Activated T-helper 1 cell treated with anti-CD3 and anti-CD28 coated beads, Interleukin-12 subunit alpha, Interleukin-12 subunit beta, Interleukin-2, Interleukin-4 antibody, amounts not matched to agents 30 ng/mL and 10 ng/mL and 1 ng/mL, durations not matched to agents 14 hours and 24 hours and 36 hours (primary cell): ENCODE measurements at regions of chr3 and their contacts with region 1.

Region 1: GRCh38 chr3:172332256-172333041 is 115.8 kb downstream of the GHSR start:
- DNase-seq: peak; percentile 43
- H3K4me3 Mint-ChIP-seq: no peak overlapping the region
- H3K27ac Mint-ChIP-seq: no peak overlapping the region
- H3K4me1 Mint-ChIP-seq: no peaks in the 10 kb centered on the region
- H3K27me3 Mint-ChIP-seq: no peaks in the 10 kb centered on the region

Region 2: DNA sequence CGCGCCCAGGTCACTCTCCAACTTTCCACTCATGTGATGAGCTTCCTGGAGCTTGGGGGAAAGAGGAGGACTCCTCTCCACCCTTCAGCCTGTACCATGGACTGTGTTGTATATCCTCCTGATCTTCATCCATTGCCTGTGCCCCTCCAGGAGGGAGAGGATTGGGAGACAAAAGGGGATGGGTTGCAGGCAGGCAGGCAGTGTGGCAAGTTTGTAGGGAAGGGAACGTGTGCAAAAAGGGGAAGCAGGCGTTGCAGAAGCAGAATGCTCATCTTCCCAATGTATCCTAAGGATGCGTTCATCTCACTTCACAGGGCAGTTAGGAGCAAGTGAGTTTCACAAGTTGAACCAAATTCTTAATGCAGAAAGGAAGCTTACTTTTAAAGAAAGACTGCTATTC is 143.9 kb after region 1 on chr3:
- intact Hi-C with region 1: loop called (anchors 1 kb)
- DNase-seq: no peak
- H3K4me3 Mint-ChIP-seq: peak overlapping the region; percentile 16
- H3K27ac Mint-ChIP-seq: no peak overlapping the region
- H3K4me1 Mint-ChIP-seq: peaks cover 22% of the 10 kb centered on the region
- H3K27me3 Mint-ChIP-seq: peaks cover 7% of the 10 kb centered on the region

Region 3: DNA sequence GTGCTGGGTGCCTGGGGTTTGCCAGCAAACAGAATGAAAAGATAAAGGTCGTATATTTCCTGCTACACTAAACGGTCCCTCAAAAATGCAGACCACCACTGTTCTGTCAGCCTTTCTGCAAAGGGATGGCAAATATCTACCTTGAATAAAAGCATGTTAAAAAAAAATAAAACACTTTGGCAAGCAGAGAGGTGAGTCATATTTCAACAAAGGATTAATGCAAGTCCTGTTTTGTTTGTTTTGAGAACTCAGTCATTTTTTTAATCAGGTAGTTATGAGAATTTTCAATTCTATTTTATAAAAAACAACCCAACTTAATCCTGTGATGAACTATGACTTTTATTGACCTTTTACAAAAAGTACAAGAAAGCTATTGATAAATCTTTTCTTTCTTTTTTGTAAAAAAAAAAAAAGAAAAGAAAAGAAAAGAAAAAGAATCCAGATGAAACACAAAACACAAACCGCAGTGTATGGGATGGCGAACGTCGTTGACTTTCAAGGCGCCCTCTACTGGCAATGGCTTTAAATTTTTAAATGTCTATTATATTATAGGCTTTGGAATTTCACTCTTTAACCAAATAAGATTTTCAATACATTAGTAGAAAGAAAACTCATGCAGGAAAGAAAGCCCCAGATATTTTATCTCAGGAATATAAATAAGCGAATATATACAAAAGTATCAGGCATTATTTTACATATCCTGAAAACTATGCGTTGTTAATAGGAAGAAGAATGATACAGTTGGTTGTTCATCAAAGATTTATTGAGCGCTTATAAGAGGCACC is 290.7 kb after region 1 on chr3:
- intact Hi-C with region 1: loop called (anchors 1 kb)
- DNase-seq: no peak
- H3K4me3 Mint-ChIP-seq: peak overlapping the region; percentile 50
- H3K27ac Mint-ChIP-seq: no peak overlapping the region
- H3K4me1 Mint-ChIP-seq: peaks cover 25% of the 10 kb centered on the region
- H3K27me3 Mint-ChIP-seq: peaks cover 2% of the 10 kb centered on the region

Region 4: GRCh38 chr3:172673210-172673679 is 340.8 kb after region 1 on chr3:
- intact Hi-C with region 1: loop called (anchors 2 kb)
- DNase-seq: peak; percentile 52
- H3K4me3 Mint-ChIP-seq: no peak overlapping the region
- H3K27ac Mint-ChIP-seq: no peak overlapping the region
- H3K4me1 Mint-ChIP-seq: peaks cover 5% of the 10 kb centered on the region
- H3K27me3 Mint-ChIP-seq: no peaks in the 10 kb centered on the region